ENCODE measurements at regions of chr4 and their contacts with region 1.

Region 1: GRCh38 chr4:161247831-161248230 is 916.0 kb downstream of the FSTL5 start:
- DNase-seq: no peak
- H3K4me3 ChIP-seq: no peak overlapping the region
- H3K27ac ChIP-seq: no peak overlapping the region
- H3K4me1 ChIP-seq: no peaks in the 10 kb centered on the region
- H3K27me3 ChIP-seq: no peaks in the 10 kb centered on the region
- CTCF ChIP-seq: no peak
- POLR2A ChIP-seq: no peak

Region 2: DNA sequence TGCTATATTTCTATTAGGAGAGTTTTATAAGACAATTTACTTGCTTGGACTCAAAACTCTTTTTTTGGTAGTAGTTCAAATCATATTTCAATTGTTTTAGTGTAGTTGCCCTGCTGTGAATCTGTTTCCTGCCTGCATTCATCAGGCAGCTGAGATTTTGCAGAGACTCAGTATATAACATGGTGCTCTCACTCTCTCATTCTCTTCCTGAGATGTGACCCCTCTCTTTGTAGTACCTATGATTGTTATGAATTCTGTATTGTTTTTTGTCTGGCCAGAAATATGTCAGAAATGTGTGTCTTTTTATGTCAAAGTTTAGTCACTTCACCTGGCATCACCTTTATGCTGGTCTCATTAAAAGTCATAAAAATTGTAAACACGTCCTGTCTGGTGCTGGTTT is 1770.9 kb before region 1 on chr4:
- intact Hi-C with region 1: loop called in 1 of 2 experiments (anchors 10 kb)
- DNase-seq: no peak
- H3K4me3 ChIP-seq: no peak overlapping the region
- H3K27ac ChIP-seq: no peak overlapping the region
- H3K4me1 ChIP-seq: no peaks in the 10 kb centered on the region
- H3K27me3 ChIP-seq: no peaks in the 10 kb centered on the region
- CTCF ChIP-seq: no peak
- POLR2A ChIP-seq: no peak

Region 3: GRCh38 chr4:161291222-161291621 is 43.4 kb after region 1 on chr4:
- intact Hi-C with region 1: no loop called
- DNase-seq: no peak
- H3K4me3 ChIP-seq: no peak overlapping the region
- H3K27ac ChIP-seq: no peak overlapping the region
- H3K4me1 ChIP-seq: no peaks in the 10 kb centered on the region
- H3K27me3 ChIP-seq: no peaks in the 10 kb centered on the region
- CTCF ChIP-seq: no peak
- POLR2A ChIP-seq: no peak

Region 4: DNA sequence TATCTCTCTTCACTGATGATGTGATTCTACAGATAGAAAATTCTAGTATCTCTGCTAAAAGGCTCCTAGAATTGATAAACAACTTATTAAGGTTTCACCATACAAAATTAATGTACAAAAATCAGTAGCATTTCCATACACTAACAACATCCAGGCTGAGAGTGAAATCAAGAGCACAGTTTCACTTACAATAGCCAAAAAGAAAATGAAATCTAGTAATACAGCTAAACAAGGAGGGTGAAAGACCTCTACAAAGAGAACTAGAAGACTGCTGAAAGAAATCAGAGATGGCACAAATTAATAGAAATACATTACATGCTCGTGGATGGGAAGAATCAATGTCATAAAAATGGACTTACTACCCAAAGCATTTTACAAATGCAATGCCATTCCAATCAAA is 164.1 kb after region 1 on chr4:
- intact Hi-C with region 1: no loop called
- DNase-seq: no peak
- H3K4me3 ChIP-seq: no peak overlapping the region
- H3K27ac ChIP-seq: no peak overlapping the region
- H3K4me1 ChIP-seq: no peaks in the 10 kb centered on the region
- H3K27me3 ChIP-seq: no peaks in the 10 kb centered on the region
- CTCF ChIP-seq: no peak
- POLR2A ChIP-seq: no peak

Region 5: DNA sequence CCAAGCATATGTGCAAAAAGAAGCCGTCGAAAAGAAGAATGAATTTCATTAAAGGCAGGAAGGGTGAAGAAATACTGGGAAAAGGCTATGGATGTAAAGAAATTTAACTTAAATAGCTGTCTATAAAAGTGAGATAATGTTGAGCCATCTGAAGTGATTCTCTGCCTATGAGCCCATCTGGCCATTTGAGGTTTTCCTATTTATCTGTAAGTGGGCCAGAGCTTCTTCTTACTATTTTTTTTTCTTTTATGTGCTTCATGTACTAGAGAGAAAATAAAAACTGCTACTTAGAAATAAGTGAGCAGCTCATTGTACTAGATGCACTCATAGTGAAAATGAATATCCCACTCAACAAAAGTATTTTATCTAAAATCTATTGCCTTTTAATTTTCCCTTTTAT is 190.3 kb after region 1 on chr4:
- intact Hi-C with region 1: no loop called
- DNase-seq: no peak
- H3K4me3 ChIP-seq: no peak overlapping the region
- H3K27ac ChIP-seq: no peak overlapping the region
- H3K4me1 ChIP-seq: no peaks in the 10 kb centered on the region
- H3K27me3 ChIP-seq: no peaks in the 10 kb centered on the region
- CTCF ChIP-seq: no peak
- POLR2A ChIP-seq: no peak